Endothelial cell of umbilical vein (primary cell): ENCODE measurements at regions of chr12 and their contacts with region 1.

Region 1: DNA sequence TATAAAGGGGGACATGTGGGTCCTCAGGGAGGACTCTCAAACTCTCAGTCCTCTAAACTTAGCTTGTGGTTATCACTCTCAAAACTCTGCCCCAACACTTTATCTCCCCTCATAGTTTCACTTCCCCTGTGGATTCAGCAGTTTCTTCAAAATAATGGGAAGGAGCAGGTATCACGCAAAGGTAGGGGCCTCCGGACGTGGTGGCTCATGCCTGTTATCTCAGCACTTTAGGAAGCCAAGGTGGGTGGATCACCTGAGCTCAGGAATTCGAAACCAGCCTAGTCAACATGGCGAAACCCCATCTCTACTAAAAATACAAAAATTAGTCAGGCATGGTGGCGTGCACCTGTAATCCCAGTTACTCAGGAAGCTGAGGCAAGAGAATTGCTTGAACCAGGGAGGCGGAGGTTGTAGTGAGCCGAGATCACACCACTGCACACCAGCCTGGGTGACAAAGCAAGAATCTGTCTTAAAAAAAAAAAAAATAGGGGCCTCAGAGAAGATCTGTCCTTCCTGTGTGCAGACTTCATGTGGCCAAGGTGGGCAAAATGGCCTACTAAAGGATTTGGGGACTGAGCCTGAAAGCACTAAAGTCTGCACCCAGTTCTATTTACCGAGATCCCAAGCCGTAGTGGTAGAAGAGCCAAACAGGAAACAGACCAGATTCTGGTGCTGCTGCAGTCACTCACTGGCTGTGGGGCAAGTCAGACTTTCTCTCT is 6.4 kb downstream of the ITGB7 start:
- DNase-seq: no peak
- H3K4me3 ChIP-seq: no peak overlapping the region
- H3K27ac ChIP-seq: no peak overlapping the region
- H3K4me1 ChIP-seq: peaks cover 6% of the 10 kb centered on the region
- H3K27me3 ChIP-seq: peaks cover 0 to 2% of the 10 kb centered on the region in 2 experiments
- CTCF ChIP-seq: no peak
- POLR2A ChIP-seq: no peak

Region 2: GRCh38 chr12:53039851-53040250 is 160.8 kb before region 1 on chr12:
- CTCF ChIA-PET with region 1: interaction called, 17 read pairs
- POLR2A ChIA-PET with region 1: no interaction called
- dilution Hi-C with region 1: no loop called
- intact Hi-C with region 1: no loop called
- DNase-seq: no peak
- H3K4me3 ChIP-seq: no peak overlapping the region
- H3K27ac ChIP-seq: no peak overlapping the region
- H3K4me1 ChIP-seq: peaks cover 30% of the 10 kb centered on the region
- H3K27me3 ChIP-seq: no peaks in the 10 kb centered on the region
- CTCF ChIP-seq: no peak
- POLR2A ChIP-seq: no peak

Region 3: GRCh38 chr12:53079226-53080117 is 121.1 kb before region 1 on chr12 and contains the start of gene SPRYD3:
- CTCF ChIA-PET with region 1: interaction called, 15 read pairs
- POLR2A ChIA-PET with region 1: interaction called, 3 read pairs
- dilution Hi-C with region 1: no loop called
- intact Hi-C with region 1: no loop called
- DNase-seq: peak; percentile 98
- H3K4me3 ChIP-seq: peak within 1 kb of the TSS; percentile 68 to 87 (median 80)
- H3K27ac ChIP-seq: peak within 1 kb of the TSS; percentile 52
- H3K4me1 ChIP-seq: peaks cover 9% of the 10 kb centered on the region
- H3K27me3 ChIP-seq: no peaks in the 10 kb centered on the region
- CTCF ChIP-seq: no peak
- POLR2A ChIP-seq: peak; percentile 98
- total RNA-seq, gene SPRYD3: 31.7 and 39.2 TPM in 2 replicates

Region 4: GRCh38 chr12:53174881-53175491 is 25.6 kb before region 1 on chr12:
- CTCF ChIA-PET with region 1: interaction called, 30 read pairs
- POLR2A ChIA-PET with region 1: no interaction called
- dilution Hi-C with region 1: no loop called
- intact Hi-C with region 1: no loop called
- DNase-seq: peak; percentile 28
- H3K4me3 ChIP-seq: no peak overlapping the region
- H3K27ac ChIP-seq: no peak overlapping the region
- H3K4me1 ChIP-seq: peaks cover 5% of the 10 kb centered on the region
- H3K27me3 ChIP-seq: no peaks in the 10 kb centered on the region
- CTCF ChIP-seq: peak; percentile 7 to 25
- POLR2A ChIP-seq: no peak

Region 5: GRCh38 chr12:53190108-53190729 is 10.4 kb before region 1 on chr12:
- CTCF ChIA-PET with region 1: interaction called, 39 read pairs
- POLR2A ChIA-PET with region 1: no interaction called
- dilution Hi-C with region 1: no loop called
- intact Hi-C with region 1: no loop called
- DNase-seq: peak; percentile 49
- H3K4me3 ChIP-seq: no peak overlapping the region
- H3K27ac ChIP-seq: no peak overlapping the region
- H3K4me1 ChIP-seq: peaks cover 4% of the 10 kb centered on the region
- H3K27me3 ChIP-seq: no peaks in the 10 kb centered on the region
- CTCF ChIP-seq: peak; percentile 73 to 86
- POLR2A ChIP-seq: no peak

Region 6: GRCh38 chr12:53279283-53279869 is 78.8 kb after region 1 on chr12:
- CTCF ChIA-PET with region 1: no interaction called
- POLR2A ChIA-PET with region 1: no interaction called
- dilution Hi-C with region 1: no loop called
- intact Hi-C with region 1: no loop called
- DNase-seq: no peak
- H3K4me3 ChIP-seq: no peak overlapping the region
- H3K27ac ChIP-seq: no peak overlapping the region
- H3K4me1 ChIP-seq: no peaks in the 10 kb centered on the region
- H3K27me3 ChIP-seq: no peaks in the 10 kb centered on the region
- CTCF ChIP-seq: no peak
- POLR2A ChIP-seq: no peak